Activated B cell treated with CpG ODN at 0.5 μM for 24 hours (primary cell): ENCODE measurements at regions of chr2 and their contacts with region 1.

Region 1: GRCh38 chr2:152740743-152741328 is 22.4 kb downstream of the ARL6IP6 start:
- DNase-seq: no peak
- ATAC-seq: peak; percentile 79
- H3K4me3 Mint-ChIP-seq: no peak overlapping the region
- H3K27ac Mint-ChIP-seq: no peak overlapping the region
- H3K4me1 Mint-ChIP-seq: peaks cover 2% of the 10 kb centered on the region
- H3K27me3 Mint-ChIP-seq: no peaks in the 10 kb centered on the region
- CTCF ChIP-seq: peak; percentile 54

Region 2: GRCh38 chr2:152036611-152037469 is 704.0 kb before region 1 on chr2:
- CTCF ChIA-PET with region 1: no interaction called
- POLR2A ChIA-PET with region 1: no interaction called
- intact Hi-C with region 1: loop called (anchors 1 kb)
- DNase-seq: peak; percentile 19
- ATAC-seq: peak; percentile 50
- H3K4me3 Mint-ChIP-seq: no peak overlapping the region
- H3K27ac Mint-ChIP-seq: no peak overlapping the region
- H3K4me1 Mint-ChIP-seq: no peaks in the 10 kb centered on the region
- H3K27me3 Mint-ChIP-seq: no peaks in the 10 kb centered on the region
- CTCF ChIP-seq: peak; percentile 52

Region 3: DNA sequence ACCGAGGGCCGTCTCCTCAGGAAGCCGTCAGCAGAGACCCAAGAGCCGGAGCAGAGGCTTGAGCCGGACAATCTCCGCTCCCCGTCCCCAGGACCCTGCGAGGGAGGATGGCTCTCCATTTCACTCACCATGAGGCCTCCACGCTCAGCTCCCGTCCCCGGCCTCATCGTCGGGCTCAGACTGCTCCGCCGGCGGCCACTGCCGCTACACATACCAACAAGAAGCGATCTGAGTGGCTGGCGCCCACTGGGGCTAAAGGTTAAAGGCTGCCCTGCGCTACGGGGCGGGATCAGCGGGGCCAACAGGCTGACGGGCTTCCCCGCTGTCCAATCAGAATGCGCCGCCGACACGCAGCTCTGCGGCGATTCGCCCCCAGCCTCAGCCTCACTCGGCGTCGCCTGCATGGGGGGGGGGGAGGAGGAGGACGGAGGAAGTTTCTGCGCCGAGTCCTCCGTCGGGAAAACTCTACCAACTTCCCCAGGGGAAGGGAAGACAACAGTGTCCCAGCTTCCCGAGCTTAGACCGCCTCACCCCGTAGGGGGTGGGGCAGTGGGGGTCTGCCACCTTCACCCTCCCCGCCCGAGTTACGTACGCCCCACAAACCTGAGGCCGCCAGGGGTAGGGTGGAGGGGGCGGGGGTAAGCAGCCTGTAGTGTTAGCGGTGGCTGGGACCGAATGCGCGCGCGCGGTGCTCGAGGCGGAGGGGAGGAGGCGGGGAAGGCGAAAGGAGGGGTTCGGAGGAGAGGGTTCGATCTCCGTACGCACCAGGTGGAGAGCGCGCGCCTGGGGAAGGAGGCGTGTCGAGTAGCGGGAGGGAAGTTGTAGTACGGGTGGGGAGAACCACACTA is 23.4 kb before region 1 on chr2 and contains the start of gene PRPF40A:
- CTCF ChIA-PET with region 1: interaction called, 4 read pairs
- POLR2A ChIA-PET with region 1: no interaction called
- intact Hi-C with region 1: loop called (anchors 1 kb)
- DNase-seq: peak; percentile 97
- ATAC-seq: peak; percentile 76
- H3K4me3 Mint-ChIP-seq: peak within 1 kb of the TSS; percentile 100
- H3K27ac Mint-ChIP-seq: peak within 1 kb of the TSS; percentile 98
- H3K4me1 Mint-ChIP-seq: peaks cover 51% of the 10 kb centered on the region
- H3K27me3 Mint-ChIP-seq: no peaks in the 10 kb centered on the region
- CTCF ChIP-seq: no peak
- total RNA-seq, gene PRPF40A: 126 and 129 TPM in 2 replicates

Region 4: DNA sequence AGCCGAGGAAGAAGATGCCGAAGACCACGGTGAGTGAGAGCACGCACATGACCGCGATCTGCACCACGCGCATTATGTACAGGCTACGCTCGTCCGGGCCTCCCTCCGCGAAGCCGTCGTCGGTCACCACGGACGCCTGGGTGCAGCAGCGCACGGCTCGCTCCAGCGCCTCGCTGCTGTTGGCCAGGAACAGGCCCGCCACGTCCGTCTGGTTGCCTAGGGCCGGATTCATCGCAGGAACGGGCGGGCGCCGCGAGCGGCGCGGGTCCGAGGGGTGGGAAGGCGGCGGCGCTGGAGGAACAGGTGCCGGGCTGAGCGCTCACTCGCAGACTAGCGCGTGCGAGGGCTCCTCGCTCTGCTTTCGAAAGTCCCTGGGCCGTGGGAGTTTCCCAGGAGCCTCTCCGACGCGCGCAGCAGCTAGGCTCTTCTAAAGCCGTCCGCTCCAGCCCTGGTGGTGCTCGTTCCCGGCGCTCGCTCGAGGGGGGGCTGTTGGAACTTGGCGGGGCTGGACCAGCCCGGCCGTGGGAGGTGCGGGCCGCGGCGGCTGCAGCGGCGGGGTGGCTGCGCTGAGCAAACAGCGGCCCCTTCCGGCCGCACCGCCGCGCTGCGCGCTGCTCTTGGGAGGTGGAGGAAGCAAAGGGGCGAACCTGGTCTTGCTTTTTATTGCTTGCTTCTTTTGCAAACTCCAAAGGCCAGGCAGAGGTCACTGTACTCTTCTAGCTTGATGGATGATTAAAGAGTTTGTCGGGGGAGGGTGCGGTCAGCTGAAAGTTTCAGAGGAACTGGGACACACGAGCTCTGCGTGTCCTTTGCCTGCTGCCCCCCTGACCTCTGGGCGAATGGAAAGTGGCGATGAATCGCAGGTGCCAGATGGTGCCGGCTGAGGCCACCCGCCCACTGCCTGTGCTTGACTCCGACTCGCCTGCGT is 737.8 kb after region 1 on chr2 and contains the start of gene RPRM:
- CTCF ChIA-PET with region 1: no interaction called
- POLR2A ChIA-PET with region 1: no interaction called
- intact Hi-C with region 1: loop called (anchors 2 kb)
- DNase-seq: peak; percentile 52
- ATAC-seq: peak; percentile 87
- H3K4me3 Mint-ChIP-seq: peak within 1 kb of the TSS; percentile 73
- H3K27ac Mint-ChIP-seq: no peak within 1 kb of the TSS
- H3K4me1 Mint-ChIP-seq: peaks cover 22% of the 10 kb centered on the region
- H3K27me3 Mint-ChIP-seq: peaks cover 56% of the 10 kb centered on the region
- CTCF ChIP-seq: no peak
- total RNA-seq, gene RPRM: not detected in 2 replicates

Region 5: DNA sequence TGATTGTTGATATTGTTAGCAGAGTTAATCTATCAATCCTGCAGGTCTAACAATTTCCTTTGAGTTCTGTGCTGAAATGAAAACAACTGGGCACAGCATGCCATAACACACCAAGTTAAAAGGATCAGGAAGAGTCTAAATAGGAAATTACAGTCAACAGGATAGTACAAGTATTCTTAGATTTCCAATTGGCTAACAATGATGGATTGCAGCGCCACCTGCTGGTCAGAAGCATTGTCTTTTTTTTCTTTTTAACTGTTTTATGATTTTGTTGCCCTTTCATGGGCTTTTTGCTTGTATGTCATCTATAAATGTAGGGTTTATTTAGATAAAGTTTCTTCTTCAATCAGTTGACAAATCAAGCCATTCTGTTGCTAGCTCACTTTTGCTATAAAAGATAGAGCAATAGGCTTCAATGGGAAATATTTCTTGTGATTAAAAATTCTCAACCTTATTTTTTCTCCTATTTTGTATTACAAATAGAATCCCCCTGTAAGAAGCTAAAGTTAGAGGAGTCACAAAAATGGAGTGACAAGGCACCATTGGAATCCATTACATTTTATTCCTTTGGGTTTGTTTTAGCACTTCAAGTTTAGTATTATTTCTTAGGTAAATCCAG is 778.5 kb after region 1 on chr2:
- CTCF ChIA-PET with region 1: interaction called, 5 read pairs
- POLR2A ChIA-PET with region 1: no interaction called
- intact Hi-C with region 1: loop called (anchors 1 kb)
- DNase-seq: no peak
- ATAC-seq: no peak
- H3K4me3 Mint-ChIP-seq: no peak overlapping the region
- H3K27ac Mint-ChIP-seq: no peak overlapping the region
- H3K4me1 Mint-ChIP-seq: no peaks in the 10 kb centered on the region
- H3K27me3 Mint-ChIP-seq: no peaks in the 10 kb centered on the region
- CTCF ChIP-seq: no peak